T-cell (primary cell): ENCODE measurements at regions of chrX and their contacts with region 1.

Region 1: DNA sequence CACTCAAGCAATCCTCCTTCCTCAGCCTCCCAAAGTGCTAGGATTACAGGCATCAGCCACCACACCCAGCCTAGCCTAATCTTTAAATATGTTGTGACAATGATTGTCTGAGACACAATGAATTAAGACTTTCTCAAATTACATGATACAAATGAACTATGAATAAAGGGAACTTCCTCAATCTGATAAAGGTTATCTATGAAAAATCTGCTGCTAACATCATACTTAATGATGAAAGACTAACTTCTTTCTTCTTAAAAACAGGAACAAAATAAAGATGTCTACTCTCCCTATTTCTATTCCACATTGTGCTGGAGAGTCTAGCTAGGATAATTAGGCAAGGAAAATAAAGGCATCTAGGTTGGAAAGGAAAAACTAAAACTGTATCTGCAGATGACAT is 60.0 kb downstream of the PDHA1 start:
- DNase-seq: no peak
- ATAC-seq: no peak
- H3K4me3 ChIP-seq: no peak overlapping the region
- H3K4me3 Mint-ChIP-seq: no peak overlapping the region
- H3K27ac ChIP-seq: no peak overlapping the region
- H3K27ac Mint-ChIP-seq: no peak overlapping the region
- H3K4me1 ChIP-seq: no peaks in the 10 kb centered on the region
- H3K4me1 Mint-ChIP-seq: no peaks in the 10 kb centered on the region
- H3K27me3 ChIP-seq: peaks cover 0 to 6% of the 10 kb centered on the region in 2 experiments
- H3K27me3 Mint-ChIP-seq: peaks cover 3 to 14% of the 10 kb centered on the region in 2 donors

Region 2: DNA sequence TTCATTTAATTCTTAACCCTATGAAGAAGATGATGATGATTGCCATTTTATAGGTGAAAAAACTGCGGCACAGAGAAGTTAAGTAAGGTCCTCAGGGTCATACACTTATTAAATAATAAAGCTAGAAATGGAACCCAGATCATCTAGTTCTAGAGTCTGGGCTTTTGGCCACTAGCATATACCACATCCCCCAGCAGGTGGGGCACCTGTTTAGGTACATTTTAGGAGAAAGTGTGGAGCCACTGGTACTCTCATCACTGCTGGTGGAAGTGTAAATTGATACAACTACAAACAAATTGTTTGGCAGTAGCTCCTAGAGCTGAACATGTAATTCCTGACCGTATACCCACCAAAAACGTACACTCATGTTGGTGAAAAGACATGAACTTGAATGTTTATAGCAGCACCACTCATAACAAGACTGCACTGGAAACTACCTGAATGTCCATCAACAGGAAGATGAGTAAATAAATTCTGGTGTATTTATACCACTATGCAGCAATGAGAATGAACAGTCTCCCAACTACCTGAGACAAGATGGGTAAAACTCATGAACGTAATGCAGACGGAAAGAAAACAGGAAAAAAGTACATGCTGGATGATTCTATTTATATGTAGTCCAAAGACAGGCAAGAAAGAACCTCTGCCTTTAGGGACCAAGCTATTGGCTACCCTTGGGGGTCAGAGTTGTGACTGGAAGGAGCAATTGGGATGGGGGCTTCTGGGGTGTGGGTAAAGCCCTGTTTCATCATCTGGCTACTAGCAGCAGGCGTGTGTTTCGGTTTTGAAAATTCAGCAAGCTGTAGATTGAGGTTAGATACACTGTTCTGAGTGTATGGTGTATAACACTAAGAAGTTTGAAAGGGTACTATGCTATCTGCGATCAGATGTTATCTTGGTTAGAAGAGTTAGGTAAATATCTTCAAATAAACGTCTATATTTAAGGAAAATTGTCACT is 209.1 kb before region 1 on chrX:
- CTCF ChIA-PET with region 1: no interaction called
- POLR2A ChIA-PET with region 1: interaction called in 1 of 2 experiments, 13 read pairs
- DNase-seq: peak in 1 of 35 experiments; percentile 12
- ATAC-seq: no peak
- H3K4me3 ChIP-seq: no peak overlapping the region
- H3K4me3 Mint-ChIP-seq: peak overlapping the region in 1 of 3 donors; percentile 31
- H3K27ac ChIP-seq: no peak overlapping the region
- H3K27ac Mint-ChIP-seq: peak overlapping the region in 1 of 2 donors; percentile 40
- H3K4me1 ChIP-seq: no peaks in the 10 kb centered on the region
- H3K4me1 Mint-ChIP-seq: peaks cover 0 to 14% (median 0%) of the 10 kb centered on the region in 3 donors
- H3K27me3 ChIP-seq: peaks cover 0 to 2% of the 10 kb centered on the region in 2 experiments
- H3K27me3 Mint-ChIP-seq: peaks cover 0 to 22% of the 10 kb centered on the region in 2 donors

Region 3: GRCh38 chrX:19372170-19372546 is 31.5 kb before region 1 on chrX:
- CTCF ChIA-PET with region 1: no interaction called
- POLR2A ChIA-PET with region 1: no interaction called
- DNase-seq: peak; percentile 35 to 74 (median 55)
- ATAC-seq: peak; percentile 67 to 86 (median 78)
- H3K4me3 ChIP-seq: peak overlapping the region; percentile 33 to 51
- H3K4me3 Mint-ChIP-seq: peak overlapping the region; percentile 78 to 86 (median 79)
- H3K27ac ChIP-seq: no peak overlapping the region
- H3K27ac Mint-ChIP-seq: peak overlapping the region in 1 of 2 donors; percentile 7
- H3K4me1 ChIP-seq: peaks cover 0 to 9% of the 10 kb centered on the region in 2 experiments
- H3K4me1 Mint-ChIP-seq: peaks cover 5 to 9% (median 6%) of the 10 kb centered on the region in 3 donors
- H3K27me3 ChIP-seq: no peaks in the 10 kb centered on the region
- H3K27me3 Mint-ChIP-seq: peaks cover 1 to 3% of the 10 kb centered on the region in 2 donors

Region 4: DNA sequence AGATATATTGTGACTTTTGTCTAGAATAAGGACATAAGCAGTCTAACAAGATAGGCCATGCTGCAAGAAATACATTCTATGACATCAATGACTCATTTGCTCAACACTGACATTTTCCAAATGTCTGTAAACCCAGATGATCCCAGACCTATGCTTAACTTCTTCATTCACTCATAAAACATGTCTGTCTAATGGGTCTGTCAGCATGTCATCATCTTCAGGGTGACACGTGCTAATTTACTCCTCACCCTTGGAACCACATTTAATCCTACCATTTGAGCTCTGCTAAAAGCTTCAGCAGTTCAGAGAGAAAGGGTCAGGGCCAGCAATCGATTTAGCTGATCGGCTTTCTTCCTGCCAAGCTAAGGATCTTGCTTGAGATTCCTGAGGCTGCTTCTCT is 221.0 kb after region 1 on chrX:
- CTCF ChIA-PET with region 1: interaction called in 1 of 2 experiments, 10 read pairs
- POLR2A ChIA-PET with region 1: no interaction called
- DNase-seq: no peak
- ATAC-seq: no peak
- H3K4me3 ChIP-seq: no peak overlapping the region
- H3K4me3 Mint-ChIP-seq: no peak overlapping the region
- H3K27ac ChIP-seq: peak overlapping the region; percentile 28
- H3K27ac Mint-ChIP-seq: peak overlapping the region; percentile 45 to 81
- H3K4me1 ChIP-seq: peaks cover 2 to 30% of the 10 kb centered on the region in 2 experiments
- H3K4me1 Mint-ChIP-seq: peaks cover 28 to 61% (median 55%) of the 10 kb centered on the region in 3 donors
- H3K27me3 ChIP-seq: no peaks in the 10 kb centered on the region
- H3K27me3 Mint-ChIP-seq: no peaks in the 10 kb centered on the region